ENCODE measurements at regions of chr18 and their contacts with region 1.

Region 1: DNA sequence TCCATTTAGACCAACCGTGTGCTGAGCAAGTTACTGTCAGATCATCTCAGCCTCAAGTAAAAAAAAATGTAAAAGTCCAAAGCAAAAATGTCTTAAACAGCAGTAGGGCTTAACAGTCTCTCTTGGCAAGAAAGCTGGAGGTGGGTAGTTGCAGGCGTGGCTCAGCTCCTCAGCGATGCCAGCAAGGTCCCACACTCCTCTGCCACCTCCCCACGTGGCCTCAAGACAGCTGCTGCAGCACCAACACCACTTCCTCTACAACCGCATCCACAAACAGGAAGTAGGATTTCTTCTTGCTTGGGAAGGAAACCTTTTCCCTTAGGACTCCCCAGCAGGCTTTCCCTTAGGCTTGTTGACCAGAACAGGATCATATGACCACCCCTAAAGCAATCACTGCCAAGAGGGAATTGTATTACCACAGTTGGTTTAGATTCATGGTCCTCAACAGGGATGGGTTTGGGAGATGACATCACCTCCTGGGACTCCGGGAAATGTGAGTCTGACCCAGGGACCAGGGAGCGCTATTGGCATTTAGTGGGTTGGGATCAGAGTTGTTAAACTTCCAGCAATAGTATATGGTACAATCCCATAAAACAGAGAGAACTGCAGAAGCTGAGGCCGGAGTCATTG is 97.1 kb downstream of the MAPK4 start:
- DNase-seq: peak; percentile 26 to 54
- ATAC-seq: peak; percentile 19 to 42
- H3K4me3 ChIP-seq: no peak overlapping the region
- H3K27ac ChIP-seq: peak overlapping the region; percentile 83 to 92 (median 88)
- H3K4me1 ChIP-seq: peaks cover 47 to 58% of the 10 kb centered on the region in 2 donors
- H3K27me3 ChIP-seq: no peaks in the 10 kb centered on the region
- CTCF ChIP-seq: no peak
- POLR2A ChIP-seq: no peak

Region 2: DNA sequence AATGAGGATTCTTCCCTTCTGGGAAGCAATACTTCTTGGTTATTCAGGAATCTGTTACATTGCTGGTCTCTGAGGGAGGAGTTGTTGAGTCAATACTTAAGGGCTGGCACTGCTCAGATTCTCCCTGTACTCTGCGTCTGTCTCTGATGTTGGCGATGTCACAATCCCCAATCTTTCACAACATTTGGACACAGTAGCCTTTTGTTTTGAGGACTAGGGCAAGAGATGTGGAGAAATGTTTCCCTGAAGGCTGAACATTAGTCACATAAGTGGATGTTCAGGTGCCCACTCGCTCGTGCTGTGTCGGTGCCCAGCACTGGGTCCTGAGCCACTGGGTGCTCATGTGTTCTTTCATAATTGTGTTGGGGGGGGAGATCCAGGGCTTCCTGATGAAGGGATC is 42.1 kb before region 1 on chr18:
- in situ Hi-C with region 1: no loop called
- intact Hi-C with region 1: loop called (anchors 2 kb)
- DNase-seq: peak; percentile 75 to 80
- ATAC-seq: peak; percentile 97 to 98
- H3K4me3 ChIP-seq: no peak overlapping the region
- H3K27ac ChIP-seq: peak overlapping the region; percentile 52 to 79 (median 72)
- H3K4me1 ChIP-seq: peaks cover 0 to 10% of the 10 kb centered on the region in 2 donors
- H3K27me3 ChIP-seq: no peaks in the 10 kb centered on the region
- CTCF ChIP-seq: no peak
- POLR2A ChIP-seq: no peak

Measured in gastrocnemius medialis (tissue), 4 donors.